ENCODE measurements at regions of chr19 and their contacts with region 1.

Region 1: GRCh38 chr19:38361633-38362075 is 12.7 kb upstream of the PSMD8 start:
- DNase-seq: peak; percentile 78
- H3K4me3 Mint-ChIP-seq: peak overlapping the region; percentile 81
- H3K27ac Mint-ChIP-seq: peak overlapping the region; percentile 31
- H3K4me1 Mint-ChIP-seq: peaks cover 19% of the 10 kb centered on the region
- H3K27me3 Mint-ChIP-seq: peaks cover 34% of the 10 kb centered on the region

Region 2: GRCh38 chr19:38374429-38375176 is 12.9 kb after region 1 on chr19 and contains the start of gene PSMD8:
- CTCF ChIA-PET with region 1: interaction called, 13 read pairs
- POLR2A ChIA-PET with region 1: no interaction called
- DNase-seq: peak; percentile 99
- H3K4me3 Mint-ChIP-seq: peak within 1 kb of the TSS; percentile 98
- H3K27ac Mint-ChIP-seq: peak within 1 kb of the TSS; percentile 97
- H3K4me1 Mint-ChIP-seq: peaks cover 28% of the 10 kb centered on the region
- H3K27me3 Mint-ChIP-seq: no peaks in the 10 kb centered on the region
- total RNA-seq, gene PSMD8: 178 to 186 TPM

Region 3: DNA sequence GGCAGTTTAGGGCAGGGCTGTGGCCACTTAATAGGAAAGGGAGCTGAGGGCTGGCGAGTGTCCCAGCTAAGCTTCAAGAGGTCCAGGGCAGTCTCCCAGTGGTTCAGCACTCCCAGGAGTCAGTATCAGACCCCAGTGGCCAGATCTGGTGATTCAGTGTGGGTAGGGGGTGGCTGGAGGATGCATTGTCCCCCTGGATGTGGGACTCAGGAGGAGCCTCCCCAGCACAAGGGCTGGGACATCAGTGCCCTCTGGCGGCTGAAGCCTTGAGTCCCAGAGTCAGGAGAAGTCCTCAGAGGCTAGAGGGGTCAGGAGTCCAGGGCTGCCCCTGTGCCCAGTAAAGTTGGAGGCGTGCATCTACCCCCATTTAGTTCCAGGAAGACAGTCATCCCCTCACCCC is 23.0 kb after region 1 on chr19:
- CTCF ChIA-PET with region 1: no interaction called
- POLR2A ChIA-PET with region 1: no interaction called
- DNase-seq: no peak
- H3K4me3 Mint-ChIP-seq: no peak overlapping the region
- H3K27ac Mint-ChIP-seq: no peak overlapping the region
- H3K4me1 Mint-ChIP-seq: peaks cover 16% of the 10 kb centered on the region
- H3K27me3 Mint-ChIP-seq: peaks cover 15% of the 10 kb centered on the region